ENCODE measurements at regions of chr17 and their contacts with region 1.

Region 1: GRCh38 chr17:53336281-53336680 is 486.4 kb upstream of the KIF2B start:
- DNase-seq: no peak
- ATAC-seq: no peak
- H3K4me3 ChIP-seq: no peak overlapping the region
- H3K27ac ChIP-seq: no peak overlapping the region
- H3K4me1 ChIP-seq: no peaks in the 10 kb centered on the region
- H3K27me3 ChIP-seq: no peaks in the 10 kb centered on the region
- CTCF ChIP-seq: no peak

Region 2: DNA sequence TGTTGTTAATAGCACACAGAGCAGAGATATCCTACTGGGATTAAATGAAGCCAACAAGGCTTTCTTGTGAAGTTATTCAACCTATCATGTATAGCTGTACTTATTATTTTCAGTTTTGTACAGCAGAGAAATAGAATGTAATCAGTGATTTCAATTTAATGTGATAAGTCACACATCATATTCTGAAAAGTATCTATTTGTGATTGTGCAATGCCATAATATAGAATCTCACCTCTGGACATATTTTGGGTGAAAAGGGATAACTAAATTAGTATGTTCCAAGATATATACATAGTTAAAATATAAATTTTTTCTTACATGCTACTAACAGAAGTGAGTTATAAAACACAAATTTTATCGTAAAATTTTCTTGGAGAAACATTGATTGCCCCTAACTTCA is 57.8 kb before region 1 on chr17:
- intact Hi-C with region 1: loop called in 1 of 10 experiments (anchors 10 kb)
- DNase-seq: no peak
- ATAC-seq: no peak
- H3K4me3 ChIP-seq: no peak overlapping the region
- H3K27ac ChIP-seq: no peak overlapping the region
- H3K4me1 ChIP-seq: no peaks in the 10 kb centered on the region
- H3K27me3 ChIP-seq: no peaks in the 10 kb centered on the region
- CTCF ChIP-seq: no peak

Measured in heart right ventricle (tissue), 16 donors.